Adrenal gland (tissue), 19 donors: ENCODE measurements at regions of chr12 and their contacts with region 1.

Region 1: DNA sequence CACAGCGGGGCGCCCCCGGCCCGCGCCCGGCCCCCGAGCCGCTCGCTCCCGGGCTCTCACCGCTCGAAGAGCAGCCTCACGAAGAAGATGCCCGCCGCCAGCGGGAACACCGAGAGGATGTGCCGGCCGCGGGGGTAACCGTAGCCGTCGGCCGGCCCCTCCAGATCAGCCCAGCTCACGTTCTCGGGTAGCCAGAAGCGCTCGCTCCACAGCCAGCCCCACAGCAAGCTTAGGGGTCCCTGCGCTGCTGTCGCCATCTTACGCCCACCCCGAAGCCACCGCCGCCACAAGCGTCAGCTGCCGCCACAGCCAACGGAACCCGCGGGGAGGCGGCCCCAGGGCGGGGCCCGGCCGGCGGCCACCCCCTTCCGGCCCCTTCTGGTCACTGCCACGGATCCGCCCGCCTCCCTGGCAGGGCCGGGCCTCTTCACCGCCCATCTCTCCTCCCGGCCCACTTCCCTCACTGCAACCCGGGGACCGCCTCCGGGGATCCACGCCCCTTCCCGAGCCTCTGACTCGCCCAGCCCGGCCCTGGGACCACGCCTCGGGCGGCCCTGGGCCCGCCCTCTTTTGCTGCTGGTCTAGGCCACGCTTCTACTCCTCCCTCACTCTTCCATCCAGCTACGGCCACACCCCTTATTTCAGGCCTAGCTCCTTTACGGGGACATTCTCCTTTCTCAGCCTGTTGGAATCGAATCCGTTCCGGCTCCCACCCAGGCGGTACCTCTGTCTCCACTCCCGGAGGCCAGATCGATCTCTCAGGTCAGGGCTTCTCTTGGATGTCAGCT is at the start of gene CERS5:
- DNase-seq: peak; percentile 99
- H3K4me3 ChIP-seq: peak within 1 kb of the TSS; percentile 63 to 86 (median 74)
- H3K27ac ChIP-seq: peak within 1 kb of the TSS; percentile 65 to 95 (median 92)
- H3K4me1 ChIP-seq: peaks cover 8 to 21% of the 10 kb centered on the region in 2 donors
- H3K27me3 ChIP-seq: no peaks in the 10 kb centered on the region
- CTCF ChIP-seq: peak in 4 of 6 experiments; percentile 7 to 53 (median 45)
- POLR2A ChIP-seq: peak; percentile 32 to 73
- total RNA-seq, gene CERS5: 19.4 to 48.1 (median 36.8) TPM

Region 2: GRCh38 chr12:50111693-50112455 is 55.4 kb before region 1 on chr12 and contains the start of gene COX14:
- intact Hi-C with region 1: loop called in 1 of 2 experiments (anchors 2 kb)
- DNase-seq: peak; percentile 98 to 100 (median 99)
- H3K4me3 ChIP-seq: peak within 1 kb of the TSS; percentile 25 to 97 (median 62)
- H3K27ac ChIP-seq: peak within 1 kb of the TSS; percentile 77 to 100 (median 99)
- H3K4me1 ChIP-seq: peaks cover 31 to 49% of the 10 kb centered on the region in 2 donors
- H3K27me3 ChIP-seq: no peaks in the 10 kb centered on the region
- CTCF ChIP-seq: peak; percentile 79 to 90 (median 84)
- POLR2A ChIP-seq: peak; percentile 99 to 100
- total RNA-seq, gene COX14: 61.2 to 150 (median 120) TPM

Region 3: DNA sequence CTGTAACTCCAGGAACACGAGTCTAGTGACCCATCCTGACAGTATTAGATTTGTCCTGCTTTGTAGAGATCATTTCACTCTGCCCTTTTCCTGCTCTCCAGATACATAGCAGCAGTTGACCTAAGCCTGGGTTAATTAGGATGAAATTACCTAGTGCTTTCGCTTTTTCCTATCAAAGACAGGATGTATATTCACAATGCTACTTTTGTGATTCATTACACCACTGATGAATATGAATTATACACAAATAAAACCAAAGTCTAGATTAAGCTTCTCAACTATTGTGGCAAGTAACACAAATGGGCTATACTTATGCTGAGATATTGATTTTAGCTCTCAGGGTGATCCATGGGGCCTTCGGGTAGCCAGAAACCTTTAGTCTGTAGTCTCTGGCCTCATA is 17.9 kb before region 1 on chr12:
- intact Hi-C with region 1: loop called in 1 of 2 experiments (anchors 2 kb)
- DNase-seq: no peak
- H3K4me3 ChIP-seq: no peak overlapping the region
- H3K27ac ChIP-seq: no peak overlapping the region
- H3K4me1 ChIP-seq: peaks cover 5% of the 10 kb centered on the region in 2 donors
- H3K27me3 ChIP-seq: no peaks in the 10 kb centered on the region
- CTCF ChIP-seq: no peak
- POLR2A ChIP-seq: no peak